ENCODE measurements at regions of chr13 and their contacts with region 1.

Region 1: DNA sequence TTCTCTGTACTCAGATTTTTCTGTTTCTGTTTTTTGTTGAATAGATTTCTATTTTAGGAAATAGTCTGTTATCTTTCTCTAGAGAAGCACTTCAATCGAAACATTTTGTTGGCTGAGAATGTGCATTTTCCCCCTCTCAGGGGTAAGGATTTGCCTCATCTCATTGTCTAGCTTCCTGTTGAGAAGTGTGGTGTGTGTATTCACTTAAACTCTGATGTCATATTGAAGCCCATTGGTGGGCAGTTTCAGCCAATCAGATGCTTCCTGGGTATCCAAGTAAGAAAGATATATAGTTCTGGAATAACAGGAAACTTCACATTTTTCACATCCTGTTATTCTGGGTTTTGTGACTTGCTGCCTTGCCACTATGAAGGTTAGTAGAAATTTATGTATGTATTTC is 87.6 kb downstream of the ARHGEF7 start:
- DNase-seq: no peak
- H3K4me3 ChIP-seq: no peak overlapping the region
- H3K27ac ChIP-seq: no peak overlapping the region
- H3K4me1 ChIP-seq: peaks cover 53% of the 10 kb centered on the region
- H3K27me3 ChIP-seq: no peaks in the 10 kb centered on the region
- CTCF ChIP-seq: no peak
- POLR2A ChIP-seq: no peak

Region 2: GRCh38 chr13:110600980-110601560 is 601.7 kb before region 1 on chr13:
- intact Hi-C with region 1: no loop called
- DNase-seq: no peak
- H3K4me3 ChIP-seq: no peak overlapping the region
- H3K27ac ChIP-seq: no peak overlapping the region
- H3K4me1 ChIP-seq: peaks cover 4% of the 10 kb centered on the region
- H3K27me3 ChIP-seq: no peaks in the 10 kb centered on the region
- CTCF ChIP-seq: no peak
- POLR2A ChIP-seq: no peak

Region 3: DNA sequence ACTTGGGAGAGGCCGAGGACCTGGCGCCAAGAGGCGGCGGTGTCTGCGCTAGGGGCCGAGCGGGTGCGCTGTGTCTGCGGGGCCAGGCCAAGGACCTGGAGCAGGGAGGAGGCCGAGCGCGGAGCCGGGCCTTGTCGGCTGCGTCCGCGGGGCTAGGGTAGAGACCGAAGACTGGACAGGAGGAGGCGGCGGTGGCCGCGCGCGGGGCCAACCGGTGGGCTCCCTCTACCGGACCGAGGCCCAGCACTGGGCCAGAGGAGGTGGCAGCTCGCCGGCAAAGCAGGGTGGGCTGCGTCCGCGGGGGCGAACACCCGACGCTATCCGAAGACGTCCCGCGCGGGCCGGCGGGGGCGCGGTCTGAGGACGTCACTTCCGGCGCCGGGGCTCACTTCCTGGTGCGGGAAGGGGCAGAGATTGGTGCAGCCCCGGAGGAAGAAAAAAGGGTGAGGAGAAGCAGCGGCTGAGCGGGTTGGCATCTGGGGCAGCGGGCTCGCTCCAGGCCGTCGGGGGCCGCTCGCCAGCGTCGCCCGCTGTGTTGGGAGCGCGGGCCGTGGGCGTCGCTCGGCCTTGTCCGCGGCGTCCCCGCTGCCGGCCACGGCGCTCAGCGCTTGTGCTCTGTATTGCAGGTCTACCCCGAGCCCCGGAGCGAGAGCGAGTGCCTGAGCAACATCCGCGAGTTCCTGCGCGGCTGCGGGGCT is 49.3 kb before region 1 on chr13:
- intact Hi-C with region 1: loop called (anchors 10 kb)
- DNase-seq: peak in 1 of 2 donors; percentile 93
- H3K4me3 ChIP-seq: peak overlapping the region; percentile 79 to 86
- H3K27ac ChIP-seq: peak overlapping the region; percentile 93
- H3K4me1 ChIP-seq: peaks cover 53% of the 10 kb centered on the region
- H3K27me3 ChIP-seq: no peaks in the 10 kb centered on the region
- CTCF ChIP-seq: no peak
- POLR2A ChIP-seq: peak in 1 of 2 donors; percentile 74

Region 4: GRCh38 chr13:111383591-111384440 is 181.1 kb after region 1 on chr13:
- intact Hi-C with region 1: no loop called
- DNase-seq: peak in 1 of 2 donors; percentile 72
- H3K4me3 ChIP-seq: no peak overlapping the region
- H3K27ac ChIP-seq: no peak overlapping the region
- H3K4me1 ChIP-seq: no peaks in the 10 kb centered on the region
- H3K27me3 ChIP-seq: no peaks in the 10 kb centered on the region
- CTCF ChIP-seq: no peak
- POLR2A ChIP-seq: no peak